Right ventricle myocardium inferior (tissue), 1 donor: ENCODE measurements at regions of chr3 and their contacts with region 1.

Region 1: DNA sequence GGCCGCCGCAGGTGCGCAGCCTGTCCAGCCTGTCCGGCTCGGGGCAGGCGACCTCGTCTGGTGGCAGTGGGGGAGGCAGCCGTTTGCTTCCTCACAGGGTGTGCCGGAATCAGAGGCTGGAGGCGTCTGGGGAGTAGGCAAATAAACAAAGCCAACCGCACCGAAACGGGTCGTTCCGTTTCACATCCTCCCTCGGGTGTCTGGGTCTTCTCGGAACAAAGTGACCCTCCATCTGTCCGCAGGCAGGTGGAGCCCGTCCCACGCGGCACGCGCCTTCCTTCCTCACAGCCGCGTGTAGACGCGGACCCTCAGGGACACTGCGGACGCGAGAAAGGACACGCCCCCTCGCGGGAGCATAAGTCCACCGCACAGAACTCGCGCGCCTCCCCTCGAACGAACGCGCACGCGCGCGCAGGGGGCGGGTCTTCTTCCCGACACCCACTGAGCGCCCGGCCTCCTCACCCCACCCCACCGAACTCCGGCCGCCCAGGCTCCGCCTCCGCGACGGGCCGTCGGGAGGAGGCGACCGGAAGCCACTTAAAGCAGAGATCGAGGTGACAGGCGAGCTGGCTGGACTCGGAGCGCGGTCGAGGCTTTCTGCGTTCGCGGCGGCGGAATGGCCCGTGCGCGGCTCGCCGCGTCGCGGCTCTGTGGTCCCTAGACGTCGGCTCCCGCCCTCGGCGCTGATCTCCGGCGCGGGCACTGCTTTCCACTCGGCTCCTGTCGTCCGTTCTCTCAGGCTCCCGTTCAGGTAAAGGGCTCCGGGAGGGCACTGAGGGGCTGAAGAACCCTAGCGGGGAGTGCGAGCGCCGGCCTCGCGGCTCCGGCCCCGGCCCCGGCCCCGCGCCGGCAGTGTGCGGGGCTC is at the start of gene TIPARP:
- DNase-seq: peak; percentile 100
- ATAC-seq: peak; percentile 96
- total RNA-seq, gene TIPARP: 26.0 TPM

Region 2: DNA sequence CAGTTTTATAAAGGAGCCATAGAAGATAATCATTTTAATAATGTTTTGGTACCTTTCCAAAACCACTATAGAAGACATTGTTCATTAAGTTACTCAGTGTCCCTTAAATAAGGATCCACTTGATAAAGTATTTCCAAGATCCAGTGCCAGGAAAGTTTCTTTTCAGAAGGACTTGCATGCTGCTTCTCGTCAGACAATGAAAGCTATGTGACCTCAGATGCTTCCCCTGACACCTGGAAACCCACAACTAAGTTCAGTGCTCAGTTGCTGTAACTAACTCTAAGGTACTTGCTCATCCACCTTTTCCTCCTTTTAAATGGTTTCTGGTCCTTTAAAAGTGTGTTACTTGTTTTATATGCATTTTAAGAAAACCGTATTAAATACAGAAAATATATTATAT is 126.6 kb before region 1 on chr3:
- intact Hi-C with region 1: loop called (anchors 5 kb)
- DNase-seq: no peak
- ATAC-seq: peak; percentile 56

Region 3: DNA sequence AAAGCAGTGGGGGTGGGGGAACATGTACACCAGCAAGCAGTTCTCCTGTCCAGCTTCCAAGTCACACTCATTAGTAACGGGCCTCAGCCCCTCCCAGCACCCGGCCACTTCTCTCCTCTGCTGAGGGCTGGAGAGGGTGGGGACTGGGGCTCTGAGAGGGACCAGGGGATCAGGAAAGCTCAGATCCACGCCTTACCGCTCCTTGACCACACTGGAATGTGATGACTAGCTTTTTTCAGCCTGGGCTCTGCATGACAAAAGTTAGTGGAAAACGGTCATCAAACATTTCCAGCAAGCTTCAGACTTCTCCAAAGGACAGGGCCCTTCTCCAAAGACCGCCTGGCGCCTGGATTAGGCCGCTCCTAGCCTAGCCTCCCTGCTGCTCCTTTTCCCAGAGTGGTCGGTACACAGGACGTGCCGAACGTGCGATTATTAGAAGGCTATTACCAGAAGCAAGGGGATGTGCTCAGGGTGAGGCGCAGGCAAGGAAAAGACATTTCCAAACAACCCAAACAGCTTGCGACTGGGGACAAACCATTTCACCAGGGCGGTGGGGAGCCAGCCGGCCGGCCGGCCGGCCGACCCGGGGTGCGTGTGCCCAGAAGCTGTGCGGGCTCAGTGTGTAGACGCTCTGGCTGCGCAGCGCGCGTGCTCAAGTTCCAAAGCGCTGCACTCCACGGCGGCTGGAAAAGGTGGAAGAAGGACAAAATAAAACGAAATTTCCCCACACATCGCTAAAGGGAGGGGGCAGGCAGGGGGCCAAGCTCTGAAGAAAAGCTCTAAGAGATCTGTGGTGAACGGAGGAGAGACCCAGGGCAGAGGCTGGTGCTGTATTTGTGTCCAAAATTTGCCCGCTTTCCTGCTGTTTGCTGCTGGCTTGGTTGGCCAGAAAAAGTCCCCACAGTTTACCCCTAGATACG is 68.3 kb before region 1 on chr3:
- intact Hi-C with region 1: loop called (anchors 5 kb)
- DNase-seq: peak; percentile 74
- ATAC-seq: peak; percentile 86

Region 4: GRCh38 chr3:157081681-157082210 is 407.5 kb after region 1 on chr3:
- intact Hi-C with region 1: loop called (anchors 2 kb)
- DNase-seq: peak; percentile 95
- ATAC-seq: peak; percentile 84

Region 5: DNA sequence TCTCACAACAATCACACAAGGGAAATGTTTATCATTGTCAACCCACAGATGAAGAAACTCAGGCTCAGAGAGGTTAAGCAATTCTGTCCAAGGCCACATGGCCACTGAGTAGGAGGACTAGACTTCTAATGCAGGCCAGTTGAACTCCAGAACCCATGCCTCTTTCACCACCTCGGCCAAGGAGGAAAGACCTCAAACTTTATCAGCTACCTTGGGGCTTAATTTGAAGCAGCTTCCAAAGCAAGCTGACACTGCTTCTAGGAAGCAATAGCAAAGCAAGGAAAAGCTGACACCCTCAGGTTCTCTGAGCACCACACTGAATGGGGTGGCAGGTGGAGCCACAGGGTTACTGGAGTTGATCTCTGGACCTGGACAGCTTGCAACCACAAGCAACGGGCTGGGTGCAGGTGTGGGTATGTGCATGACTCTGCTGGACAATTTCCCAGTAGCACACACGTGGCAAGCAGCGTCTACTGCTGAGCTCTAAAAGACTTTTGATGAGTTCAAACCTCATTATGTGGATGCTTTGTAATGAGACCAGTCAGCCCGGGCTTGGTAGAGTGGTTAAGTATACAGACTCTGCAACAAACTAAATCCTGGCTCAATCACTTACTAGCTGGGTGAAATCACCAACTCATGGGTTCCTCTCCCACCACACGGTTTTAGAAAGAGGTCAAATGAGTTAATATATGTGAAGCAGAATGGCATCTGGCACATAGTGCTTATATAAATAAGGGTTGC is 462.5 kb after region 1 on chr3:
- intact Hi-C with region 1: loop called (anchors 2 kb)
- DNase-seq: no peak
- ATAC-seq: peak; percentile 40